Activated CD8-positive, alpha-beta memory T cell treated with anti-CD3 and anti-CD28 coated beads, Interleukin-2, amount 10 ng/mL, durations not matched to agents 7 days and 5 days (primary cell): ENCODE measurements at regions of chr17 and their contacts with region 1.

Region 1: GRCh38 chr17:27654654-27655524 is 23.9 kb downstream of the LGALS9 start:
- DNase-seq: peak; percentile 82
- ATAC-seq: peak; percentile 82
- H3K4me3 Mint-ChIP-seq: no peak overlapping the region
- H3K27ac Mint-ChIP-seq: no peak overlapping the region
- H3K4me1 Mint-ChIP-seq: peaks cover 6% of the 10 kb centered on the region
- H3K27me3 Mint-ChIP-seq: no peaks in the 10 kb centered on the region

Region 2: DNA sequence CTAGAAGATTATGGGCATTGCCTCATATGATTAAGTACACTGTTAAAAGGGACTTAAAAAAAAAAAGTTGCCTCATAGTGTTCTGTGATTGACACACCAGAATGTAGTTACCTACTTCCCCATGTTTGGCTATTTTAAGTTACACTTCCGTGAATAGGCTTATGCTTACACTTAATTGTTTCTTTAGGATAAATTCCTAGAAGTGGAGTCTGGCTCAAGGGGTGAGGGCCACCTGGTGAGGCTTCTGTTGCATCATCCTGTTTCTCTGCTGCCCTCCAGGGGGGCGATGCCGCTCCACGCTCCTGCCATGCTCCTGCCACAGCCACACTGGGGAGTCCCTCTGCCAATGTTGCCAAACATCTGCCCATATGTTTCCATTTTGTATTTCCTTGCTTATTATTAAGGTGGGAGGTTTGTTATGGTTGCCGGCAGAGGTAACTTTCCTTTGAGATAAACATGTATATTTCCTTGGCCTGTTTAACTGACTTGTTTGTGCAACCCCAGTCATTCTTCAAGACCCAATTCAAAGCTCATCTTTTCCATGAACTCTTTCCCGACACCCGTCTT is 125.6 kb before region 1 on chr17:
- CTCF ChIA-PET with region 1: no interaction called
- DNase-seq: no peak
- ATAC-seq: no peak
- H3K4me3 Mint-ChIP-seq: no peak overlapping the region
- H3K27ac Mint-ChIP-seq: peak overlapping the region; percentile 9
- H3K4me1 Mint-ChIP-seq: peaks cover 69% of the 10 kb centered on the region
- H3K27me3 Mint-ChIP-seq: no peaks in the 10 kb centered on the region

Region 3: GRCh38 chr17:27590864-27591263 is 64.0 kb before region 1 on chr17:
- CTCF ChIA-PET with region 1: no interaction called
- DNase-seq: no peak
- ATAC-seq: no peak
- H3K4me3 Mint-ChIP-seq: no peak overlapping the region
- H3K27ac Mint-ChIP-seq: no peak overlapping the region
- H3K4me1 Mint-ChIP-seq: peaks cover 10% of the 10 kb centered on the region
- H3K27me3 Mint-ChIP-seq: no peaks in the 10 kb centered on the region

Region 4: DNA sequence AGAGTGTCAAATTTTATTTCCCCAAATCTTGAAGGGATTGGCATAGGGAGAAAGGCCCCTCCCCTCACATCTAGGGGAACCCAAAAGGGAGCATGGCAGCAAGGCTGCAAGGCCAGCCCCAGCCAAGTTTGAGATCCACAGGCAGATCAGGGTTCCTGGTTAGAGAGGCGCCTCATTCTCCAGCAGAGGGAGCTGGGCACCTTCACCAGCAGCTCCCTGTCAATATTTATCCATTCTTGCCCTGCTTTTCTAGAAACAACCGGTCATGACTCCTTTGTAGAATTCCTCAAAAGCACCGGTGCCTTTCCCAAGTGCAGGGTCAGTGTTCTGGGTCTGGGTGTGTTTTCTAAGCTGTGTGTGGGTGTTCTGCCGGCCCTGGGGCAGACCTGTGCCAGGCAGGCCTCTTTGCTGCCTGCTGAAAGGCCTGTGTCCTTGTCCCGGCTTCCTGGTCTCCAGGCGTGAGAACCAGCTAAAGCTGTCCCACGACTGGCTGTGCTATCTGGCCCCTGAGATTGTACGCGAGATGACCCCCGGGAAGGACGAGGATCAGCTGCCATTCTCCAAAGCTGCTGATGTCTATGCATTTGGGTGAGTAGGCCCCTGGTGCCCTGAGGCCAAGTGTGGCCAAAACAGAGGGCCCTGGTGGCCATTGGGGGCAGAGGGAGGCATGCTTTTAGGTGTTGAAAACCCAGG is 45.1 kb before region 1 on chr17:
- CTCF ChIA-PET with region 1: interaction called, 152 read pairs
- DNase-seq: peak; percentile 48
- ATAC-seq: peak; percentile 60
- H3K4me3 Mint-ChIP-seq: no peak overlapping the region
- H3K27ac Mint-ChIP-seq: no peak overlapping the region
- H3K4me1 Mint-ChIP-seq: peaks cover 17% of the 10 kb centered on the region
- H3K27me3 Mint-ChIP-seq: no peaks in the 10 kb centered on the region

Region 5: GRCh38 chr17:27630607-27631410 is 24.1 kb before region 1 on chr17 and contains the start of gene LGALS9:
- CTCF ChIA-PET with region 1: interaction called, 25 read pairs
- DNase-seq: peak; percentile 72
- ATAC-seq: peak; percentile 84
- H3K4me3 Mint-ChIP-seq: peak within 1 kb of the TSS; percentile 93
- H3K27ac Mint-ChIP-seq: peak within 1 kb of the TSS; percentile 94
- H3K4me1 Mint-ChIP-seq: peaks cover 68% of the 10 kb centered on the region
- H3K27me3 Mint-ChIP-seq: no peaks in the 10 kb centered on the region
- total RNA-seq, gene LGALS9: 150 to 305 TPM

Region 6: DNA sequence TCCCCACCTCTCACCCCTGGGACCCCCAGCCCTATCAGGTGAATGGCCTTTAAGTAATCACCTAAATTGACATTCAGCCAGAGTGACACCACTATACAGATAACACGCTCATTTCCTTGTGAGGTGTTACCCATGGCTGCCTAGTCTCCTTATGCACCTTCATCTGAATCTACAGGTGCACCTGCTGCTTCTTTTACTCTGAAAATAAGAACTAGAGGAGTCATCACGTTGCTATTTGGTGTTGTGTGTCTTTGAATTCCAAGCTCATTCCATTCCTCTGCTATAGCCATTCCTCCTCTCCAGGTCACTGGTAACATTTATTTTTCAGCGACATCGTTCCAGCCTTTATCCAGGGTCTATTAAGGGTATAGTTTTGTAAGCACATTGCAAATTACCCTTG is 14.1 kb before region 1 on chr17:
- CTCF ChIA-PET with region 1: interaction called, 12 read pairs
- DNase-seq: no peak
- ATAC-seq: no peak
- H3K4me3 Mint-ChIP-seq: no peak overlapping the region
- H3K27ac Mint-ChIP-seq: no peak overlapping the region
- H3K4me1 Mint-ChIP-seq: peaks cover 4% of the 10 kb centered on the region
- H3K27me3 Mint-ChIP-seq: no peaks in the 10 kb centered on the region

Region 7: GRCh38 chr17:27721797-27722196 is 66.9 kb after region 1 on chr17:
- CTCF ChIA-PET with region 1: no interaction called
- DNase-seq: no peak
- ATAC-seq: no peak
- H3K4me3 Mint-ChIP-seq: no peak overlapping the region
- H3K27ac Mint-ChIP-seq: no peak overlapping the region
- H3K4me1 Mint-ChIP-seq: no peaks in the 10 kb centered on the region
- H3K27me3 Mint-ChIP-seq: peaks cover 32% of the 10 kb centered on the region

Region 8: DNA sequence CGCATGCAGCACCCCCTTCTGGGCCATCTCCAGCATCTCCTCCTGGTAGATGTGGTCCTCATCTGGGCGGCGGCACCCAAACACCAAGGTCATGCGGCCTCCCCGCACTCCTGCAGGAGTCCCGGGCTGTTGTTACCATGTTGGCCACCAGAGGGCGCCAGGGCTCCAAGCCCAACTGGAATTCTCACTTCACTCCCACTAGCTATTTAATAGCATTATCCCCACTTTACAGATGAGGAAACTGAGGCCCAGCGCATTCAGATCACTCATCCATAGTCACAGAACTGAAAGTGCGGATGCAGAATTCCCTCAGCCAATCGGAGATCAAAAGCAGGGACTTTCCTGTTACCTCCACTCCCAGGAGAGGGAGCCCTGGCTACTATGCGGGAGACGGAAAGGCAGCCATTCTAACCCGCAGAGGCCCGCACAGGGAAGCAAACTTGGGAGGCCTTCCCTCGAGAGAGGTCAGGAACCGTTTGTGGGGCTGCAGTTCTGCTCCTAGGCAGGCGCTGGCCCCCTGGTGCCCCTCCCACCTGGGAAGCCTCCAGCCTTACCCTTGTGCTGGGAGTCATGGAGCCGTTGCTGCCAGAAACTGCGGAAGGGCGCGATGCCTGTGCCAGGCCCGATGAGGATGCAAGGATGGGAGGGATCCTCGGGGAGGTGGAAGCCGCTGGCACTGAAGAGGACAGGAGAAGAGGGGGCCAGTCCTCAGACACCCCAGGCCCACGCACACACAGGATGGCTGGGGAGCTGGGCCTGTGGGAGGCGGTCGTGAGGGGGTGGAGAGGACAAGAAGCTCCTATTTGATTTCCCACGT is 105.4 kb after region 1 on chr17:
- CTCF ChIA-PET with region 1: interaction called, 32 read pairs
- DNase-seq: peak; percentile 77
- ATAC-seq: peak; percentile 63
- H3K4me3 Mint-ChIP-seq: no peak overlapping the region
- H3K27ac Mint-ChIP-seq: no peak overlapping the region
- H3K4me1 Mint-ChIP-seq: no peaks in the 10 kb centered on the region
- H3K27me3 Mint-ChIP-seq: no peaks in the 10 kb centered on the region